Transverse colon (tissue), 4 donors: ENCODE measurements at regions of chr6 and their contacts with region 1.

Region 1: GRCh38 chr6:150068720-150069648 is at the start of gene ULBP3:
- DNase-seq: peak; percentile 93
- H3K4me3 ChIP-seq: peak within 1 kb of the TSS; percentile 49 to 57 (median 52)
- H3K27ac ChIP-seq: peak within 1 kb of the TSS; percentile 59 to 81 (median 68)
- H3K4me1 ChIP-seq: peaks cover 6 to 23% (median 15%) of the 10 kb centered on the region in 4 donors
- H3K27me3 ChIP-seq: peaks cover 4% of the 10 kb centered on the region
- CTCF ChIP-seq: peak; percentile 44 to 68 (median 51)
- EP300 ChIP-seq: no peak
- POLR2A ChIP-seq: peak; percentile 73
- total RNA-seq, gene ULBP3: 0.79 to 2.0 TPM in 2 of 4 donors, not detected in the others

Region 2: GRCh38 chr6:150195996-150196417 is 127.0 kb after region 1 on chr6:
- in situ Hi-C with region 1: no loop called
- intact Hi-C with region 1: no loop called
- DNase-seq: peak; percentile 47
- H3K4me3 ChIP-seq: no peak overlapping the region
- H3K27ac ChIP-seq: peak overlapping the region; percentile 68 to 76 (median 72)
- H3K4me1 ChIP-seq: peaks cover 19 to 36% (median 27%) of the 10 kb centered on the region in 4 donors
- H3K27me3 ChIP-seq: no peaks in the 10 kb centered on the region
- CTCF ChIP-seq: no peak
- EP300 ChIP-seq: no peak
- POLR2A ChIP-seq: no peak

Region 3: DNA sequence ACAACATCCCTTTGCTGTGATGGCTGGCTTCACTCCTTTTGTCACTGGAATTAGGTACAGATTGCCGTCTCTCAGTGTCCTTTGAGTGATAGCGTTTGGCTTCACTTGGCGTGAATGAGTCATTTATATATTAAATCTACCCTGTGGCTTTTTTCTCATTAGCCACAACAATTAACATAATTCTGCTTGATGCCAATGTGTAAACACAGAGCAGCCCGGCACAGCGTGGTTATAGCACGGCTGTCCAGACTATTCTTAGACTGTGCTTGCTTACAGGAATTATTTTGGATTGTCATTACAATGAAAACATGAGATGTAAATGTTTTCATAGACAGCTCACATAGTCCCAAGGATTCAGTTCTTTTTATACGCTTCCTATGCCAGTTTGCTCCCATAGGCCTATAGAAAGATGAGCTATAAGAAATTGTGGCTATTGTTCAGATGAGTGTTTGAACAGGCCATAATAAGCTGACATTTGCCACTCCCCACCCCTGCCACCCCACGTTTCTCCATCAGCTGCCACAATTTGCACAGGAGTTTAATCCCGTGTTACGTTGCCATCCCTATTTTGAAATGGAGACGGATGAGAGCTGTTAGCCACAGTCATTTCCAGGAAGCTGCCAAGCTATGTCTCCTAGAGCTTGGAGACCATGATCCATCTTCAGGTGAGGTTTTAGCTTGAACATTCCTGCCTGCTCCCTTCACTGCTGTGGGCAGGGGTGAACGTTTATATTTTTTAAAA is 139.8 kb after region 1 on chr6:
- in situ Hi-C with region 1: no loop called
- intact Hi-C with region 1: no loop called
- DNase-seq: no peak
- H3K4me3 ChIP-seq: no peak overlapping the region
- H3K27ac ChIP-seq: no peak overlapping the region
- H3K4me1 ChIP-seq: peaks cover 0 to 3% (median 0%) of the 10 kb centered on the region in 4 donors
- H3K27me3 ChIP-seq: no peaks in the 10 kb centered on the region
- CTCF ChIP-seq: no peak
- EP300 ChIP-seq: no peak
- POLR2A ChIP-seq: no peak

Region 4: DNA sequence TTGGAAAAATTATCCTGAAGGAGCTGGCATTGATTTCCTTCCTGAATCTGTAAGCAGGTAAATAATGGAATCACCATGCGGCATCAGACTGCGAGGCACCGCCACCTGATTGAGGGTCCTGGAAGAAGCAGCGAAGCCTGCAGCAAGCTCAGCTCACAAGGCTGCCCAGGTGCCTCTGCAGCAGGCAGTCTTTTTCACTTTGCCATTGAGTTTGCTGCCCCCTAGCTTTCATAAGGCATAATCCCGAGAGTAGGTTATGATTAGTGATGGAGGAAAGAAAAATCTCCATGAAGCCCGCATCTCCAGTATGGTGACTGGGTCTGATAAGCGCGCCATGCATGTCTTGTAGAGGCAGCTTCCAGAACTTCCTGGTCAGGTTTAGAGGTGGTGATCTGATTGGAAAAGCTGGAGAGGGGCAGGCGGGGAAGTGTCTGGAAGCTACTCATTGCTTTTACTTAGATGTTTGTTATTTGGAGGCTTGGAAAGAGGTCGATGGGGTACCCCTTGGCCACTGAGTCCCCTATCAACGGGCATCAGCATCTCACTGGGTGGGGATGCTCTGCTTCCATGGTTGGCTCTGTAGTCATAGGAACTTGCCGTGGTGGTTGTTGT is 326.5 kb after region 1 on chr6:
- in situ Hi-C with region 1: loop called in 2 of 4 experiments (anchors 10 kb)
- intact Hi-C with region 1: no loop called
- DNase-seq: peak; percentile 35
- H3K4me3 ChIP-seq: no peak overlapping the region
- H3K27ac ChIP-seq: no peak overlapping the region
- H3K4me1 ChIP-seq: no peaks in the 10 kb centered on the region
- H3K27me3 ChIP-seq: no peaks in the 10 kb centered on the region
- CTCF ChIP-seq: peak; percentile 60 to 73 (median 67)
- EP300 ChIP-seq: no peak
- POLR2A ChIP-seq: no peak

Region 5: GRCh38 chr6:150800674-150801314 is 731.8 kb after region 1 on chr6:
- in situ Hi-C with region 1: loop called in 2 of 4 experiments (anchors 10 to 25 kb)
- intact Hi-C with region 1: no loop called
- DNase-seq: no peak
- H3K4me3 ChIP-seq: no peak overlapping the region
- H3K27ac ChIP-seq: no peak overlapping the region
- H3K4me1 ChIP-seq: no peaks in the 10 kb centered on the region
- H3K27me3 ChIP-seq: no peaks in the 10 kb centered on the region
- CTCF ChIP-seq: no peak
- EP300 ChIP-seq: no peak
- POLR2A ChIP-seq: no peak